Prostate gland (tissue), 2 donors: ENCODE measurements at regions of chr1 and their contacts with region 1.

Region 1: DNA sequence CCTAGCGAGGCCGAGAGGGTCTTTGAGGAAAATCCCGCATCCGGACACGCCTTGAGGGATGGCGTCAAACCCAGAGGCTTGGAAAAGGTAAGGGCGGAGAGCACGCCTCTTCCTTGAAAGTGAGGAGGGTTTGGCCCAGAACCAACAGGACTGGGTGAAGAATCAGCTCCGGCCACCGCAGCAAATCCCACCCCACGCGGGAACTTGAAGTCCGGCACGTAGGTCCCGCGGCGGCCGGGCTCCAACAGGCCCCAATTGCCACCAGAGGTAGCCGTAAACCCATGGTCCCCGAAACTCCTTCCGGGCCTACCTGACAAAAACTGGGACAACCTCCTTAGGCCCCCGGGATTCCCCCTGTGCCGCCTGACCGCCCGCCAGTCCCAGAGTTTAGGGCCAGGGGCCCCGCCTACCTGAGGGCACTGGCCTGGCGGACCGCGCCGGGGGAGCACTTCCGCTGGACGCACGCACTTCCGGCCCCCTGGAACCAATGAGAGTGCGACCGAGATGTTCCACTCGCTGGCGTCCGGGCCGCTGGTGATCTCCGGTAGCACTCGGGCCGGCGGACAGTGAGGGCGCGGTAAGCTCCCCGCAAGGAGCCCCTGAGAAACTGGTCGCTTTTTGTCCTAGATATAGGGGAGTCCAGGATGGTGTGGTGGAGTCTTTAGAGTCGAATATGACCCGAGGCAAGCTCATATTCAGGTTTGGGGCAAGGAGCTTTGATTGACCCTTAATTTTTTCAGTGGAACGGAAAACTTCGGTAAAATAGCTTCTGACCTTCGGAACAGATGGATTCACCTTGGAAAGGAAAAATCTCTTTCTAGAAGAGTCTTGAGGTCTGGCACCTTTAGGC is at the starts of genes LZIC and NMNAT1:
- DNase-seq: peak; percentile 89
- H3K4me3 ChIP-seq: peak within 1 kb of the TSS; percentile 63 to 77
- H3K27ac ChIP-seq: peak within 1 kb of the TSS; percentile 79 to 86
- H3K4me1 ChIP-seq: no peaks in the 10 kb centered on the region
- H3K27me3 ChIP-seq: no peaks in the 10 kb centered on the region
- CTCF ChIP-seq: peak in 2 of 4 experiments; percentile 23 to 40
- POLR2A ChIP-seq: peak; percentile 79
- total RNA-seq, gene LZIC: 21.5 to 42.2 TPM
- total RNA-seq, gene NMNAT1: 7.2 to 8.7 TPM

Region 2: GRCh38 chr1:9910425-9911178 is 32.6 kb before region 1 on chr1:
- intact Hi-C with region 1: no loop called
- DNase-seq: peak; percentile 100
- H3K4me3 ChIP-seq: peak overlapping the region; percentile 35 to 49
- H3K27ac ChIP-seq: peak overlapping the region; percentile 92 to 94
- H3K4me1 ChIP-seq: peaks cover 10% of the 10 kb centered on the region
- H3K27me3 ChIP-seq: no peaks in the 10 kb centered on the region
- CTCF ChIP-seq: peak in 2 of 4 experiments; percentile 21 to 43
- POLR2A ChIP-seq: peak; percentile 96

Region 3: GRCh38 chr1:10024512-10024911 is 81.3 kb after region 1 on chr1:
- intact Hi-C with region 1: no loop called
- DNase-seq: no peak
- H3K4me3 ChIP-seq: no peak overlapping the region
- H3K27ac ChIP-seq: no peak overlapping the region
- H3K4me1 ChIP-seq: no peaks in the 10 kb centered on the region
- H3K27me3 ChIP-seq: no peaks in the 10 kb centered on the region
- CTCF ChIP-seq: no peak
- POLR2A ChIP-seq: no peak

Region 4: GRCh38 chr1:10152709-10153284 is 209.6 kb after region 1 on chr1:
- intact Hi-C with region 1: loop called (anchors 5 kb)
- DNase-seq: peak; percentile 49
- H3K4me3 ChIP-seq: no peak overlapping the region
- H3K27ac ChIP-seq: no peak overlapping the region
- H3K4me1 ChIP-seq: no peaks in the 10 kb centered on the region
- H3K27me3 ChIP-seq: no peaks in the 10 kb centered on the region
- CTCF ChIP-seq: peak; percentile 32 to 62 (median 58)
- POLR2A ChIP-seq: no peak